Esophagus muscularis mucosa (tissue), 4 donors: ENCODE measurements at regions of chr11 and their contacts with region 1.

Region 1: GRCh38 chr11:43419460-43419859 is 60.7 kb downstream of the TTC17 start:
- DNase-seq: no peak
- H3K4me3 ChIP-seq: no peak overlapping the region
- H3K27ac ChIP-seq: no peak overlapping the region
- H3K4me1 ChIP-seq: peaks cover 0 to 4% (median 0%) of the 10 kb centered on the region in 4 donors
- H3K27me3 ChIP-seq: no peaks in the 10 kb centered on the region
- CTCF ChIP-seq: peak; percentile 43 to 70 (median 46)
- EP300 ChIP-seq: no peak
- POLR2A ChIP-seq: no peak

Region 2: DNA sequence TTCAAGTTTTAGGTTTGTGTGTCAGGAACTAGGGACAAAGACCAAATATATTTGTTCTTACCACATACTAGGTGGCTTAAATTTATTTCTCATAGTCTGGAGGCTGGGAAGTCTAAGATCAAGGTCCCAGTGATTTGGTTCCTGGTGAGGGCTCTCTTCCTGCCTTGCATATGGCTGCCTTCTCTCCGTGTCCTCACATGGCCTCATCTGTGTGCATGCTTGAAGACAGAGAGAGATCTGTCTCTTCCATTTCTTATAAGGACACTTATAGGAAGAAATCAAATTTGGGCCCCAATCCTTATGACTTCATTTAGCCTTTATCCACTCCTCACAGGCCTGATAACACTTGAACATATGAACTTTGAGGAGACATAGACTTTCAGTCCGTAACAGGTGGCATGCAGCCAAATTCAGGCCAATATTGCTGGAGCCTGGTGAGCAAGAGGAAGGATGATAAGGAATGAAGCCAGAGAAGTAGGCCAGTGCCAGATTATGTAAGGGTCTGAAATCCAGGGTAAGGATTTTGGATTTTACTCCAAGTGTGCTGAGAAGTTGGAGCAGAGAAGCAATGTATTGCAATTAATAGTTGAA is 25.6 kb before region 1 on chr11:
- intact Hi-C with region 1: loop called (anchors 2 kb)
- DNase-seq: no peak
- H3K4me3 ChIP-seq: no peak overlapping the region
- H3K27ac ChIP-seq: no peak overlapping the region
- H3K4me1 ChIP-seq: peaks cover 0 to 7% (median 1%) of the 10 kb centered on the region in 4 donors
- H3K27me3 ChIP-seq: no peaks in the 10 kb centered on the region
- CTCF ChIP-seq: no peak
- EP300 ChIP-seq: no peak
- POLR2A ChIP-seq: no peak